Vagina (tissue), 2 donors: ENCODE measurements at regions of chr2 and their contacts with region 1.

Region 1: GRCh38 chr2:2523461-2524347 is 192.6 kb upstream of the MYT1L start:
- DNase-seq: no peak
- H3K4me3 ChIP-seq: no peak overlapping the region
- H3K27ac ChIP-seq: no peak overlapping the region
- H3K4me1 ChIP-seq: no peaks in the 10 kb centered on the region
- H3K27me3 ChIP-seq: no peaks in the 10 kb centered on the region
- CTCF ChIP-seq: no peak
- POLR2A ChIP-seq: no peak

Region 2: GRCh38 chr2:2306878-2307277 is 216.8 kb before region 1 on chr2:
- intact Hi-C with region 1: no loop called
- DNase-seq: no peak
- H3K4me3 ChIP-seq: no peak overlapping the region
- H3K27ac ChIP-seq: no peak overlapping the region
- H3K4me1 ChIP-seq: no peaks in the 10 kb centered on the region
- H3K27me3 ChIP-seq: no peaks in the 10 kb centered on the region
- CTCF ChIP-seq: no peak
- POLR2A ChIP-seq: no peak

Region 3: GRCh38 chr2:2505604-2506003 is 18.1 kb before region 1 on chr2:
- intact Hi-C with region 1: loop called (anchors 1 kb)
- DNase-seq: no peak
- H3K4me3 ChIP-seq: no peak overlapping the region
- H3K27ac ChIP-seq: no peak overlapping the region
- H3K4me1 ChIP-seq: no peaks in the 10 kb centered on the region
- H3K27me3 ChIP-seq: no peaks in the 10 kb centered on the region
- CTCF ChIP-seq: no peak
- POLR2A ChIP-seq: no peak

Region 4: GRCh38 chr2:2777213-2777612 is 253.5 kb after region 1 on chr2:
- intact Hi-C with region 1: no loop called
- DNase-seq: no peak
- H3K4me3 ChIP-seq: no peak overlapping the region
- H3K27ac ChIP-seq: no peak overlapping the region
- H3K4me1 ChIP-seq: no peaks in the 10 kb centered on the region
- H3K27me3 ChIP-seq: no peaks in the 10 kb centered on the region
- CTCF ChIP-seq: no peak
- POLR2A ChIP-seq: no peak

Region 5: GRCh38 chr2:3303583-3304406 is 780.1 kb after region 1 on chr2:
- intact Hi-C with region 1: no loop called
- DNase-seq: no peak
- H3K4me3 ChIP-seq: no peak overlapping the region
- H3K27ac ChIP-seq: no peak overlapping the region
- H3K4me1 ChIP-seq: no peaks in the 10 kb centered on the region
- H3K27me3 ChIP-seq: no peaks in the 10 kb centered on the region
- CTCF ChIP-seq: peak; percentile 75 to 83 (median 82)
- POLR2A ChIP-seq: no peak

Region 6: DNA sequence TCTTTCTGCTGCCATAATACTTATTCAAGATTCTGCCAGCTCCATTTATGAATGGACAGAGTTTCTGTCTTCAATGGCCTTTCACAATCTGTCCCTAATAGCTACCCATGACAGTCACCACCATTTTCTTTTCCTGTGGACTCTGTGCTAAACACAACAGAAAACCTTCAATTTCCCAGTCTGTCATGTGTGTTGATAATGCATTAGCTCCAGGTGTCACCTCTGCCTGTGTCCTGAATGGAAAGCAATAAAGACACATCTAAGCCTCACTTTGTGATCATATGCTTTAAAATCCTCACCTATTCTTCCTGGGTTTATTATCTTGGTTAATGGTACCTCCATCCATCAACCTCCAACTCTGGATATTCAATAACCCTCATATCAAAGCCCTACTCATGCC is 1951.9 kb after region 1 on chr2:
- intact Hi-C with region 1: no loop called
- DNase-seq: no peak
- H3K4me3 ChIP-seq: no peak overlapping the region
- H3K27ac ChIP-seq: no peak overlapping the region
- H3K4me1 ChIP-seq: no peaks in the 10 kb centered on the region
- H3K27me3 ChIP-seq: no peaks in the 10 kb centered on the region
- CTCF ChIP-seq: no peak
- POLR2A ChIP-seq: no peak